ENCODE measurements at regions of chr17 and their contacts with region 1.

Region 1: DNA sequence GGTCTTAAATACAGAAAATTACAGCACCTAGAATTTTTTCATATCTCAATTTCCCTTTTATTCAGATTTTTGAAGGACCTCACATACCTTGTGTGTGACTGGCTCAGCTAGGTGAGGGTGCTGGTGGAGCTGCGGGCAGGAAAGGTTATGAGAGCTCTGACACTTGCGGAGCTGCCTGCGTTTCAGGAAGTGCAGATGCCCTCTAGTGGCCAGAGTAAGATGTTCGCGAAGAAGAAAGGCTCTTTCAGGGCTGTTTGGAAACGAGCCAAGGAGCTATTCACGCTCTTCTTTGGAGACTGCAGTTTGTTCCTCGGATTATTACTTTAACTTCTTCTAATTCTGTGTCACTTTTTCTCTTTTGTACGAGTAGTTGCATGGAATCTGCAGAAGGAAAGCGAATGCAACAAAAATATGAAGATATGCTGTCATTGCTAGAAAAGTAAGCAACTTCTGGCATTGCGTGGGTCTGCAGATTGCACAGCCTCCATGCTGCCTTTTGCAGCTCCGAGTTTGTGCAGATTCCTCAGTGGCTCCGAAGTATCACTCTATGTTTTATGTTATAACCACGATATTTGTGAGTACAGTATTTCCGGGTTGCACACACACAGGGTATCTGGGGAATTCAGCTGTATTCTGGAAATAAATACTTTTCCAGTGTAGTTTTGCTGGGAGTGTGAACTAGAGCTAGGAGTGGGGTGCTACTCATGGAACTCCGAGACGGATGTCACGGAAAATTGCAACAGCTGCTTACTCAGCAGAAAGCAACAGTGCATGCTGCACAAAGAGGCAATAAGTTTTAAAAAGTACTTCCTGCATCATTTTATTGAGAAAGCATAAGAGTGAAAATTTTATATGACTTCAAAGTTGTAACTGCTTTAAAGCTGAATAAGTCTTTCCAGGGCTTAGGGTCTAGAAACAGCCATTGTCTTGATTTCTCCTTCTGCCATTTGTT is 46.3 kb downstream of the DNAH9 start:
- DNase-seq: peak; percentile 70

Region 2: DNA sequence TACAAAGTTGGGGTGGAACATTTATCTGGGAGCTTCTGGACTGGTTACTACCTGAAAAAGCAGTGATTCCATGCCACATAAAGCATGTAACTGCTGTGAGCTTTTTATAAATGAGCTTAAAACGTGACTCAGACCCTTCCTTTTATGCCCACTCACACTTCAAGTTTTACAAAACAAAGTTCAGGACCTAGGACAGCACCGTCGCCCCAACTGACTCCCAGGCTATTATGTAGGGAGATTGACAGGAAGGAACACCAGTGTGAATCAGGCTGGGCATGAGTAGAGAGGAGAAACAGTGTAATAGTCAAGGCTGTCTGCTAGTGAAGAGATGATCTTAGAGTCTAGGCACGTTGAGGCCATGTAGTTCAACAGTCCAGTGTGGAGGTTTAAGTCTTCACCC is 137.9 kb before region 1 on chr17:
- in situ Hi-C with region 1: loop called (anchors 25 kb)
- DNase-seq: peak; percentile 45

Region 3: DNA sequence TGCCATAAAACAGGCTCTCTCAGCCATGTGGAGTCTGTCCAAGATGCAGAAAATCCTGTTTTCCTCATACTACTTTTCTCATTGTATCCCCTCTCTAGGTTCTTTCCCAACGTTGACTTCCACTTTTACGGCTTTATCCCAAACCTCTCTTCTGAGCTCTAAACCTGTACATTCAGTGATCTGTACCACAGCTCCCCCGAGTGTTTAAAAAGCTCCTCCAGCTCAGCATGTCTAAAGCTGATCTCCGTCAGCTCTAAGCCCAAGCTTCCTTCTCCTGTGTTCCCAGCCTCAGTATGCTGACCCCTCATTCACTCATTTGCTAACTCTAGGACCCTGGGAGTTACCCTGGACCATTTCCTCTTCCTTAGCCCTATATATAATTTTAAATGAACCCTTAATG is 98.3 kb after region 1 on chr17:
- in situ Hi-C with region 1: loop called (anchors 25 kb)
- DNase-seq: no peak